ENCODE measurements at regions of chr10 and their contacts with region 1.

Region 1: DNA sequence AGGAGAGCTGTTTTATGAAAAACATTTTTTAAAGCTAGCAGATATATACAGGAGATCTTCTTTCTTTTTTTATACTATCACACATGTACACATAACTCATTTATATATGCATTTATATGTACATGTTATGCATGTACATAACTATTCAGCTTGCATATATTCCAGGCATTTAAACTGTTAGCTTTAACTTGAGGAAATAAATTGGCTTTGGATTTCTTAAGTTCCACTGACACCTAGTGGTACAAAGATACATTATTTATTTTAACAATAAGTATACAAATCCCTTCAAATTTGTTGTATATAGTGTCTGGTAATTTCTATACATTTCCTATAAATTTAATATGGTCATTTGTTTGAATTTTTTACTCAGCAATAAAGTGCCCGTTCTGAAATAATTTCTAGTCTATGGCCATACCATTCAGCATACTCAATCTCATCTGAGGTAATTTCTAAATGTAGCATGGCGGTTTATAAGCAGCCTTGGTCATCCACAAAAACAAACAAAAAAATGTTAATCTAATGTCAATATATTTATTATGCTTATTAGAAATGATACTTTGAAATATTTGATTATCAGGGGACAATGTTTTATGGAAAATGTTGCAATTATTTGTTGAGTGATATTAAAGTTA is 11.6 kb downstream of the ZDHHC6 start:
- DNase-seq: peak; percentile 63
- H3K4me3 ChIP-seq: no peak overlapping the region
- H3K27ac ChIP-seq: no peak overlapping the region
- H3K4me1 ChIP-seq: no peaks in the 10 kb centered on the region
- H3K27me3 ChIP-seq: no peaks in the 10 kb centered on the region
- CTCF ChIP-seq: peak in 1 of 2 donors; percentile 12
- POLR2A ChIP-seq: no peak

Region 2: DNA sequence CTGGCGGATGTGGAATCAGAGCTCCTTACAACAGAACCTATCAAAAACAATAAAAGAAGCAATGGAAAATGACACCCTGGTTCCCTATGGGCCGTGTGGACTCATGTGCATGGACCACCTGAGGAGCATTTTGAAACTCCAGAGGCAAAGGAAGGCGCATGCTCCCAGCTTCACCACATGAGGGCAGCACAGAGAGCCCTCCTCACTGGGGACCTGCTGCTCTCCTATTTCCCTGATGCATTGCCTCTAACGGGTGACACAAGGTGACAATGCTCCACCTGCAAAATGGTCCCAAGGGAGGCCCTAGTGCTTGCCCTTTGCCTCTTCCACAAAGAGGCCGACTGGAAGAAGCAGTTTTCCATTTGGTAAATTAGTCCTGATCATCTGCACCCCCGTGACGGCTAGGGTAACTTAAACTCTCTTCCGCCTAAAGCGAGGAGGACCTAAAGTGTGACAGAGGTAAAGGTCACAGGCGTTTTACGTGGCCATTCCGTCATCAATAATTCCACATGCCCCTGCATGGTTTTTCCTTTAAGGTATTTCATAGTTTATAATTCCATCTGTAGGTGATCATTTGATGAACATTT is 319.2 kb before region 1 on chr10:
- CTCF ChIA-PET with region 1: interaction called, 18 read pairs
- POLR2A ChIA-PET with region 1: no interaction called
- dilution Hi-C with region 1: no loop called
- intact Hi-C with region 1: no loop called
- DNase-seq: peak; percentile 27
- H3K4me3 ChIP-seq: no peak overlapping the region
- H3K27ac ChIP-seq: no peak overlapping the region
- H3K4me1 ChIP-seq: no peaks in the 10 kb centered on the region
- H3K27me3 ChIP-seq: no peaks in the 10 kb centered on the region
- CTCF ChIP-seq: peak; percentile 71 to 90
- POLR2A ChIP-seq: no peak

Region 3: DNA sequence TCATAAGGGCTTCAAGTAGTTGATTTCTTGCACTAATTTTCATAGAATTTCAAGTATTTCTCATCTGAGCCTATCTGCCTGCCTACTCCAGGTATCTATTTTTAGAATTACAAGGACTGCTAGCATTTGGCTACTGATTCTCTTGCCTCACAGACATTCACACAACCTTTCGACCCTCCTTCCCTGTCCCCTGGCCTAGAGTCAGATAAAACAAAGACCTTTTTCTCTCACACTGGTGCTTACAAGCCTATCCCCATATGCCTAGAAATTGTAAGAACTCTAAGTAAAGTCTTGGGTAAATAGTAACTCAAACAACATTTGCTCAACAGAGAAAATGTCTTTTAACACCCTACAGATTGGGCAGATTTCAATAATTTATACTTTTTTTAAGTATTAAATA is 257.9 kb before region 1 on chr10:
- CTCF ChIA-PET with region 1: interaction called, 58 read pairs
- POLR2A ChIA-PET with region 1: no interaction called
- dilution Hi-C with region 1: no loop called
- intact Hi-C with region 1: loop called (anchors 2 kb)
- DNase-seq: no peak
- H3K4me3 ChIP-seq: no peak overlapping the region
- H3K27ac ChIP-seq: no peak overlapping the region
- H3K4me1 ChIP-seq: no peaks in the 10 kb centered on the region
- H3K27me3 ChIP-seq: no peaks in the 10 kb centered on the region
- CTCF ChIP-seq: no peak
- POLR2A ChIP-seq: no peak

Region 4: GRCh38 chr10:112314822-112315474 is 120.2 kb before region 1 on chr10:
- CTCF ChIA-PET with region 1: interaction called, 97 read pairs
- POLR2A ChIA-PET with region 1: no interaction called
- dilution Hi-C with region 1: no loop called
- intact Hi-C with region 1: loop called (anchors 1 kb)
- DNase-seq: peak; percentile 68
- H3K4me3 ChIP-seq: no peak overlapping the region
- H3K27ac ChIP-seq: no peak overlapping the region
- H3K4me1 ChIP-seq: peaks cover 20% of the 10 kb centered on the region
- H3K27me3 ChIP-seq: no peaks in the 10 kb centered on the region
- CTCF ChIP-seq: peak; percentile 81 to 88
- POLR2A ChIP-seq: no peak

Region 5: DNA sequence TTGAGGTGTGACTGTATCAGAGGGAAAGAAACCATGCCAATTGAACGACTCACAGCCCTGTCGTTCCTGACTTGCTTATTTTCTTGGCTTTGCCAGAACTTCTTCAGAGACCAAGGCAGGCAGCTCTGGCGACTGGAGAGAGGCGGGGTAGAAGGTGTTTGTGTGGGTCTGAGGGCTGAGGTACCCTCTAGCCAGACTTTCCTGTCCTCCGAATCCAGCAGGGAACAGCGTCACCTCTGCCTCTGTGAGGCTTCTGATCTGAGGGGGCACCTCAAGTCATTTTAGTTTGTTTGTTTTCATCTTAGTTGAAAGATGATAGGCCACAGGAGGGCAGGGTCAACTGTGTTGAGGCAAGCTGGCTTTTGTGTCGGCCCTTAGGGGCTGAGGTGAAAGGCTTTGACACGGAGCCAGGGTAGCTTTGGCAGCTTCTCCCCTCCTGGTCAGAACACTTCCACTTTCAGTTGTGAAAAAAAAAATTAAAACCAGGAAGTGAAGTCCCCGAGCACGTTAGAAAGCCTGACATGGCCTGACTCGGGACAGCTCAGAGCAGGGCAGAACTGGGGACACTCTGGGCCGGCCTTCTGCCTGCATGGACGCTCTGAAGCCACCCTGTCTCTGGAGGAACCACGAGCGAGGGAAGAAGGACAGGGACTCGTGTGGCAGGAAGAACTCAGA is 59.2 kb before region 1 on chr10:
- CTCF ChIA-PET with region 1: interaction called, 22 read pairs
- POLR2A ChIA-PET with region 1: no interaction called
- dilution Hi-C with region 1: no loop called
- intact Hi-C with region 1: no loop called
- DNase-seq: peak; percentile 45
- H3K4me3 ChIP-seq: no peak overlapping the region
- H3K27ac ChIP-seq: no peak overlapping the region
- H3K4me1 ChIP-seq: peaks cover 28% of the 10 kb centered on the region
- H3K27me3 ChIP-seq: no peaks in the 10 kb centered on the region
- CTCF ChIP-seq: no peak
- POLR2A ChIP-seq: no peak

Region 6: DNA sequence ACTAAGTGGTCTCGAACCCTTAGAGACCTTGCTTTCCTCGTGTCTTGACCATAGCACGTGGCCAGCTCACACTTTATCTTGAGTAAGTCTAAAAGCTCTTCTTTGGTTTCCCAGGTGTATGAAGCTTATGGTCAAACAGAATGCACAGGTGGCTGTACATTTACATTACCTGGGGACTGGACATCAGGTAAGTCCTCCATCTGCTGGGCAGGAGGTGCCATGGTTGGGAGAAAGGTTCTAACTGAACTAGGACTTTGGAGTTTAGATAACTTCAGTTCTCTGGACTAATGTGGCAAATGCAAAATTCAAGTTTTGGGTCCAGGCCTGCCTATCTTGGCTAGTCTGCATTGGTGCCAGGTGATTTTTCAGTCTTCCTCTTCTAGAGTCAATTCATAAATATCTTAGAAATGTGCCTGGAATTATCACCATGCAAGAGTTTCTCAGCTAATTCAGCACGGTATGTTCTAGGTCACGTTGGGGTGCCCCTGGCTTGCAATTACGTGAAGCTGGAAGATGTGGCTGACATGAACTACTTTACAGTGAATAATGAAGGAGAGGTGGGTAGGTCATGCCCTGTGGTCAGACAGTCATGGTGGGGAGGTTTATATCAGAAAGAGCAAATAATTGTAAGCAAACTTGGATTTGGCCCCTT is 13.5 kb before region 1 on chr10:
- CTCF ChIA-PET with region 1: interaction called, 22 read pairs
- POLR2A ChIA-PET with region 1: interaction called, 3 read pairs
- dilution Hi-C with region 1: no loop called
- intact Hi-C with region 1: no loop called
- DNase-seq: no peak
- H3K4me3 ChIP-seq: no peak overlapping the region
- H3K27ac ChIP-seq: no peak overlapping the region
- H3K4me1 ChIP-seq: no peaks in the 10 kb centered on the region
- H3K27me3 ChIP-seq: no peaks in the 10 kb centered on the region
- CTCF ChIP-seq: no peak
- POLR2A ChIP-seq: no peak

Measured in endothelial cell of umbilical vein (primary cell).